ENCODE measurements at regions of chr3 and their contacts with region 1.

Region 1: GRCh38 chr3:43279082-43279481 is 7.3 kb upstream of the SNRK start:
- DNase-seq: no peak
- ATAC-seq: no peak
- H3K4me3 ChIP-seq: no peak overlapping the region
- H3K4me3 Mint-ChIP-seq: no peak overlapping the region
- H3K27ac ChIP-seq: no peak overlapping the region
- H3K27ac Mint-ChIP-seq: no peak overlapping the region
- H3K4me1 ChIP-seq: no peaks in the 10 kb centered on the region
- H3K4me1 Mint-ChIP-seq: peaks cover 10% of the 10 kb centered on the region
- H3K27me3 ChIP-seq: no peaks in the 10 kb centered on the region
- H3K27me3 Mint-ChIP-seq: no peaks in the 10 kb centered on the region
- CTCF ChIP-seq: no peak

Region 2: DNA sequence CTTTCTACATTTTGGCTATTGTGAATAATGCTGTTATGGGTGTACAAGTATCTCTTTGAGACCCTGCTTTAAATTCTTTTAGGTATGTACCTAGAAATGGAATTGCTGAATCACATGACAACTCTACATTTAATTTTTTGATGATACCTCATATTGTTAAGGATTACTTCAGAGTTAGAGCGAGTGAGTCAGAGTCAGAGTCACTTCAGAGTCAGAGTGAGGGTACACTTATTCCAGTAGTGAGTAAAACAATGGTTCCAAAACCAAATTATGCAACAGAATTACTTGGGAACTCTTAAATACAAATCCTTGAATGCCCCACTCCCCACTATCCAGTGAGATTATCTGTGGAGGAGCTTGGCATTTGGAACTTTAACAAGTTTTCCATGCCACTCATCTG is 43.1 kb before region 1 on chr3:
- CTCF ChIA-PET with region 1: no interaction called
- POLR2A ChIA-PET with region 1: interaction called, 3 read pairs
- intact Hi-C with region 1: loop called in 1 of 2 experiments (anchors 5 kb)
- DNase-seq: no peak
- ATAC-seq: no peak
- H3K4me3 ChIP-seq: no peak overlapping the region
- H3K4me3 Mint-ChIP-seq: no peak overlapping the region
- H3K27ac ChIP-seq: no peak overlapping the region
- H3K27ac Mint-ChIP-seq: no peak overlapping the region
- H3K4me1 ChIP-seq: peaks cover 3% of the 10 kb centered on the region
- H3K4me1 Mint-ChIP-seq: peaks cover 32% of the 10 kb centered on the region
- H3K27me3 ChIP-seq: no peaks in the 10 kb centered on the region
- H3K27me3 Mint-ChIP-seq: no peaks in the 10 kb centered on the region
- CTCF ChIP-seq: no peak

Region 3: DNA sequence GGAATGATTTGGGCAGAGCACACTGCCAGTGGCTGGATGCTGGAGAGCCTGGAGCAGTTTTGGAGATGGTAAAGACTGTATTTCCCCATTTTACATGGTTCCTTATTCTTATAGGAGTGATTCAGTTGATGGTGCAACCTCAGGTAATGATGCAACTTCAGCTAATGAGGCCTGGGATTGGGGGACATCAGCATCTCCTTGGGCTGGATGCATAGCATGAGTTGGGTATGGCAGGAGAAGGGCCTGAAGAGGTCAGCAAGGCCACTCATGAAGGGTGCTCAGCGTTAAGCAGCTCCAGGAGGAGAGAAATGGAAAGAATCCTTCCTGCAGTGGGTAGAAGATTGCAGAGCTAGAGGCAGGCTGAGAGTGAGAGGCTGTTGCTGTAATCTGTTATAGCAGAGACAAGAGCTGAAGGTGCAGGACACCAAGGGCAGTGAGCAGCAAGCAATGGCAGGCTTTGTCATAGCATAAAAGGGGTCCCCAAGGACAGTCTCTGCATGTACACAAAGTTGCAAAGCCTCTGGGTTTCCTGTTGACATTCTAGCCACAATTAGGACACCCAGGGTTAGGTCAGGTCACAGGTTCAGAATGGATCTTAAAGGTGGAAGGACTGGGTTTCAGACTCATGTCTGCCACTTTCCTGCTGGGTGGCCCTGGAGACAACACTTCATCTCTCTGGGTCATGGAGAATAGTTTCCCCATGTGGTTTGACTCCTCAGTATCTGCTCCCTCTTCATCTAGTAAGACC is 22.2 kb before region 1 on chr3:
- CTCF ChIA-PET with region 1: no interaction called
- POLR2A ChIA-PET with region 1: no interaction called
- intact Hi-C with region 1: no loop called
- DNase-seq: peak in 3 of 14 experiments; percentile 21 to 61 (median 59)
- ATAC-seq: no peak
- H3K4me3 ChIP-seq: no peak overlapping the region
- H3K4me3 Mint-ChIP-seq: no peak overlapping the region
- H3K27ac ChIP-seq: no peak overlapping the region
- H3K27ac Mint-ChIP-seq: no peak overlapping the region
- H3K4me1 ChIP-seq: peaks cover 25% of the 10 kb centered on the region
- H3K4me1 Mint-ChIP-seq: peaks cover 32% of the 10 kb centered on the region
- H3K27me3 ChIP-seq: no peaks in the 10 kb centered on the region
- H3K27me3 Mint-ChIP-seq: no peaks in the 10 kb centered on the region
- CTCF ChIP-seq: no peak

Region 4: GRCh38 chr3:43338295-43338694 is 59.2 kb after region 1 on chr3:
- CTCF ChIA-PET with region 1: no interaction called
- POLR2A ChIA-PET with region 1: no interaction called
- intact Hi-C with region 1: no loop called
- DNase-seq: peak in 1 of 14 experiments; percentile 25
- ATAC-seq: no peak
- H3K4me3 ChIP-seq: no peak overlapping the region
- H3K4me3 Mint-ChIP-seq: no peak overlapping the region
- H3K27ac ChIP-seq: no peak overlapping the region
- H3K27ac Mint-ChIP-seq: no peak overlapping the region
- H3K4me1 ChIP-seq: peaks cover 14% of the 10 kb centered on the region
- H3K4me1 Mint-ChIP-seq: peaks cover 35% of the 10 kb centered on the region
- H3K27me3 ChIP-seq: no peaks in the 10 kb centered on the region
- H3K27me3 Mint-ChIP-seq: no peaks in the 10 kb centered on the region
- CTCF ChIP-seq: no peak

Region 5: DNA sequence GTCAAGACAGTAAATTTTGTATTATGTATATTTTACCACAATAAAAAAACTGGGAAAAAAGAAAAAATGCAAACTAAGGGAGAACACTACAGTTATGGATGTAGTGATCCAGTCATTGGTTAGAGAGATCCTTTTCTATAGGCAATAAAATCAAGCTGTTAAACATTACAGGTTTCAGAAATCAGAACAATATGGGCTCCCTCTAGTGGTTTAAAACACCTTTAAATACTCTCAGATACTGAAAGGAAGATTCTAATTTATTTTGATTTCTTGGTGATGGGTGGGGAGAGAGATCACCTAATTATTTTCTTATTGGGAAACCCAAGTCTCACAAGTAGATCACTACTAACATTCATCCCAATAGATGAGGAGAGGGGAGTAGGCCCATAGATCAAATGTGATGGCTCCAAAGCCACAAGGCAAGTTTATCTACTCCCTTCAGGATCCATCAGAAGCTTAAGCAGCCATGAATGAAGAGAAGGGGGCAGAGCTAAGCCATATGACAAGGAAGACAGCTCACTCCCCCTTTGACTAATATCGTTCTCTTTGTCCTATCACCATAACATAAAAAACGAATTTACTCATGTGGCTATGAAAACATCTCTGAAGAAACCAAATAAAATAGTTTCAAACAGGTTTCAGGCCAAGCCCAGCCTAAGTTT is 224.1 kb after region 1 on chr3:
- CTCF ChIA-PET with region 1: no interaction called
- POLR2A ChIA-PET with region 1: no interaction called
- intact Hi-C with region 1: no loop called
- DNase-seq: peak in 3 of 14 experiments; percentile 64 to 71 (median 67)
- ATAC-seq: peak; percentile 63
- H3K4me3 ChIP-seq: no peak overlapping the region
- H3K4me3 Mint-ChIP-seq: no peak overlapping the region
- H3K27ac ChIP-seq: no peak overlapping the region
- H3K27ac Mint-ChIP-seq: peak overlapping the region; percentile 31
- H3K4me1 ChIP-seq: peaks cover 26% of the 10 kb centered on the region
- H3K4me1 Mint-ChIP-seq: peaks cover 50% of the 10 kb centered on the region
- H3K27me3 ChIP-seq: no peaks in the 10 kb centered on the region
- H3K27me3 Mint-ChIP-seq: no peaks in the 10 kb centered on the region
- CTCF ChIP-seq: peak; percentile 68

Region 6: DNA sequence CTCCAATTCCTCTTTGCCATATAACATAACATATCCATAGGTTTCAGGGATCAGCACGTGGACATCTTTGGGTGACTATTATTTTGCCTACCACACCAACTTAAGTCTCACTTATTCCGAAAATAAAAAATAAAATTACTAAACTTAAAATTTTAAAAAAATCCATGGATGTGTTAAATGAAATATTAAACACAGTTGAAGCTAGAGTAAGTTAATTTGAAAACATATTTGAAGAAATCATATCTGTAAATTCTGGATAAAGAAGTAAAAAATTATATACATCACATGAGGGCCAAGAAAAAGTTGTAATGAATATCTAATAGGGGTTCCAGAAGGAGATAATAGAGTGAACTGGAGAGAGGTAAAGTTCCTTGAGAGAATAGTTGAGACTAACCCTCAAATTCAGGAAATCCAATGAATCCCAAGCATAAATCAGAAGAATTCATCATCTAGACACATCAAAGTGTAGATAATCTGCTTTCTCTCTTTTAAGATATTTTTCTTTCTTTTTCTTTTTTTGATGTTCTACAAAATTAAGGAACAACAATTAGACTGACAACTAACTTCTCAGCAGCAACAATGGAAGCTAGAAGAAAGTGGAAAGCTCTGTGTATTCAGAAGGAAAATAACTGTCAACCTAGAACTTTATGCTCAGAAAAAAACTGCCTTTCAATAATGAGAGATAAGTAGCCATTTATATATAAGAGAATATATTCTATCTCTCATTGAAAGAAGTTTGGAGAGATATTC is 559.1 kb after region 1 on chr3:
- CTCF ChIA-PET with region 1: no interaction called
- POLR2A ChIA-PET with region 1: no interaction called
- intact Hi-C with region 1: no loop called
- DNase-seq: no peak
- ATAC-seq: no peak
- H3K4me3 ChIP-seq: no peak overlapping the region
- H3K4me3 Mint-ChIP-seq: no peak overlapping the region
- H3K27ac ChIP-seq: no peak overlapping the region
- H3K27ac Mint-ChIP-seq: no peak overlapping the region
- H3K4me1 ChIP-seq: no peaks in the 10 kb centered on the region
- H3K4me1 Mint-ChIP-seq: no peaks in the 10 kb centered on the region
- H3K27me3 ChIP-seq: peaks cover 0 to 6% of the 10 kb centered on the region in 2 experiments
- H3K27me3 Mint-ChIP-seq: peaks cover 48% of the 10 kb centered on the region
- CTCF ChIP-seq: no peak

Measured in CD4-positive, alpha-beta T cell (primary cell).